Posterior vena cava (tissue), 2 donors: ENCODE measurements at regions of chr3 and their contacts with region 1.

Region 1: DNA sequence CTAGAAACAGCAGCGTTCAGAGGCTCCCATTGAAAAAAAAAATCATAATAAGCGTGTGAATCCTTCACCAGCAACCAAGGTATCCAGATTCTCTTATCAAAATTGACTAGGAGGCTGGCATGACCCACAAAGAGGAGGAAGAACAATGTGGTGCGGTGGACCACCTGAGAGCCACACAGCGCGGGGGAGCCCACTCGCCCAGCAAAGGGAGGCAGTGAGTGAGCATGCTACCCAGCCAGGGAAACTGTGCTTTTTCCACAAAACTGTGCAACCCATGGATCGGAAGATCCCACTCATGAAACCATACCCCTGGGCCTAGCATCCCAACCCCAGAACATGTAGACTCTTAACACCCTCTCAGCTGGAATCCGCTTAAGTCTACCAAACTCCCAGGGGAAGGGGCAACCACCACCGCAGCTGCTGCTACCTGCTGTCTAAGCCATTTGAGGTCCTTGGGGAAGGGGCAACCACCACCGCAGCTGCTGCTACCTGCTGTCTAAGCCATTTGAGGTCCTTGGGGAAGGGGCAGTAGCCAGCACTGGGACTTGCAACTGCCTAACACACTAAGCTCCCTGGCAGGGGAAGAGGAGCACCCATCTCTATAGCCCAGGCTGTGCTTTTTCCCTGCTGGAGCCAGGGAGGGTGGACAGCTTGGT is 102.9 kb upstream of the CLDN18 start:
- DNase-seq: no peak

Region 2: DNA sequence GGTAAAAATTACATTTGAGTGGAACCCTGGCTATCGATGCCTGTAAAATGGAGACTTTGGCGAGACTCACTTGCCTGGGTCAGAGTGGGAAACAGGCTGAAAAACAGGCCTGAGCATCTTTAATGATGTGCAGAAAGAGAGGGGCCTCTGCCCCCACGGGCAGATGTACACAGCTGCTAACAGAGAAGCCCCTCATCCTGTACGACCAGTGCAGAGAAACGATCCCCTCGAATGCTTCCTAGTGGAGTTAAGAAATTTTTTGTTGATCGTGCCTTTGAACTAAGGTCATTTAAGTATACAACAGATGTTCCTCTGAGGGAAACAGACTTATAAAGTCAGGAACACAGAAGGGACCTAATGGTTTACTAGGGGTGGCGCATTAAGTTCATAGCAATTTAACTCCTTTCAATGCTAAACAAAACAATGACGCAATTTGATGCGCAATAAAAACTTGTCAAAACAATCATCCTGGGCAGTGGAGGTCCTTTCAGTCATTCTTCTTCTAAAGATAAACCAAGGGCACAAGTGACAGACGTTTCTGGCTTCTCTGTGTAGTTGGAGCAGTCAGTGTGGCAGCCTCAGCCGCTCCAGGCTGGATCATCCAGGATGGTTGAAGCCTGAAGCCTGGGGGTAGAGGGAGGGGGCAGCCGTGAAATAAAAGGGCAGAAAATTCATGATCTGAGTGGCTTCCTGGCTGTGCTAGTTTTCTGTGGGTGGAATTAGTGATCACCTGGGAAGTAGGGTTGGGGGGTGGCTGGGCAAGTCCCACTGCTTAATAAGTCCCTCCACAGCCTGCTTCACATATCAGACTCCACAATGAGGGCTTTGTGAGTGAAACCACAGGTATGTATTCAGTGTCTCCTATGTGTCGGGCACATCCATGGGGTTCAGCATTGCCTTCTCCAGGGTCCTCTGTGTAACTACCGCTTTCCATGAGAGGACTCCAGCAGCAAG is 1385.9 kb after region 1 on chr3:
- intact Hi-C with region 1: loop called in 1 of 2 experiments (anchors 5 kb)
- DNase-seq: peak; percentile 22